ENCODE measurements at regions of chr5 and their contacts with region 1.

Region 1: DNA sequence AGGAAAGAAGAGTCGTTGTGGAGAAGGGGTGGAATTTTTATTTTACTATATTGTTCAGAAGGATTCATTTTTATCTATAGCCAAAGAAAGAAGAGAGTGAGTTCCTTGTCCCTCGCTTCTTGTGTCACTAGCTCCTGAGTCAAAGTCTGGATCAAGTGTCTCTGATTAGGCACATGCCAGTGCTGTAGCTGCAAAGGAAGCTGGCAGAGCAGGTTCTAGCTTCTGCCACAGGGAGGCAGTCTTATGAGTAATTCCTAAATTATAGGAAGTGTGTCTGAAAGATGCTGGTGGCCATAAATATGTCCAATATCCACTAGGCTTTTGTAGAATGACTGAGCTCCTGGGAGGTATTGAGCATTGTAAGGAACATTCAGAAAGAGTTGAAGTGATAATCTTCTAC is 84.7 kb downstream of the DOCK2 start:
- DNase-seq: no peak
- H3K4me3 ChIP-seq: no peak overlapping the region
- H3K27ac ChIP-seq: no peak overlapping the region
- H3K4me1 ChIP-seq: no peaks in the 10 kb centered on the region
- H3K27me3 ChIP-seq: no peaks in the 10 kb centered on the region
- CTCF ChIP-seq: peak in 1 of 3 experiments; percentile 12; a peak in 1 of 4 replicates
- EP300 ChIP-seq: no peak
- POLR2A ChIP-seq: no peak
- RAD21 ChIP-seq: no peak

Region 2: GRCh38 chr5:169706758-169707691 is 14.7 kb before region 1 on chr5:
- CTCF ChIA-PET with region 1: interaction called, 20 read pairs
- POLR2A ChIA-PET with region 1: no interaction called
- DNase-seq: no peak
- H3K4me3 ChIP-seq: no peak overlapping the region
- H3K27ac ChIP-seq: no peak overlapping the region
- H3K4me1 ChIP-seq: no peaks in the 10 kb centered on the region
- H3K27me3 ChIP-seq: no peaks in the 10 kb centered on the region
- CTCF ChIP-seq: no peak
- EP300 ChIP-seq: no peak
- POLR2A ChIP-seq: no peak
- RAD21 ChIP-seq: no peak

Region 3: GRCh38 chr5:170056561-170057267 is 334.9 kb after region 1 on chr5:
- CTCF ChIA-PET with region 1: no interaction called
- POLR2A ChIA-PET with region 1: no interaction called
- DNase-seq: no peak
- H3K4me3 ChIP-seq: no peak overlapping the region
- H3K27ac ChIP-seq: no peak overlapping the region
- H3K4me1 ChIP-seq: no peaks in the 10 kb centered on the region
- H3K27me3 ChIP-seq: no peaks in the 10 kb centered on the region
- CTCF ChIP-seq: no peak
- EP300 ChIP-seq: no peak
- POLR2A ChIP-seq: no peak
- RAD21 ChIP-seq: no peak

Measured in H1 (cell line).